Activated CD4-positive, alpha-beta T cell treated with anti-CD3 and anti-CD28 coated beads for 36 hours (primary cell): ENCODE measurements at regions of chr1 and their contacts with region 1.

Region 1: GRCh38 chr1:59814180-59814900 is 409 bp upstream of the HOOK1 start:
- DNase-seq: peak; percentile 92
- ATAC-seq: peak; percentile 96
- H3K4me3 Mint-ChIP-seq: no peak overlapping the region
- H3K27ac Mint-ChIP-seq: peak overlapping the region; percentile 73
- H3K4me1 Mint-ChIP-seq: peaks cover 8% of the 10 kb centered on the region
- H3K27me3 Mint-ChIP-seq: peaks cover 5% of the 10 kb centered on the region

Region 2: DNA sequence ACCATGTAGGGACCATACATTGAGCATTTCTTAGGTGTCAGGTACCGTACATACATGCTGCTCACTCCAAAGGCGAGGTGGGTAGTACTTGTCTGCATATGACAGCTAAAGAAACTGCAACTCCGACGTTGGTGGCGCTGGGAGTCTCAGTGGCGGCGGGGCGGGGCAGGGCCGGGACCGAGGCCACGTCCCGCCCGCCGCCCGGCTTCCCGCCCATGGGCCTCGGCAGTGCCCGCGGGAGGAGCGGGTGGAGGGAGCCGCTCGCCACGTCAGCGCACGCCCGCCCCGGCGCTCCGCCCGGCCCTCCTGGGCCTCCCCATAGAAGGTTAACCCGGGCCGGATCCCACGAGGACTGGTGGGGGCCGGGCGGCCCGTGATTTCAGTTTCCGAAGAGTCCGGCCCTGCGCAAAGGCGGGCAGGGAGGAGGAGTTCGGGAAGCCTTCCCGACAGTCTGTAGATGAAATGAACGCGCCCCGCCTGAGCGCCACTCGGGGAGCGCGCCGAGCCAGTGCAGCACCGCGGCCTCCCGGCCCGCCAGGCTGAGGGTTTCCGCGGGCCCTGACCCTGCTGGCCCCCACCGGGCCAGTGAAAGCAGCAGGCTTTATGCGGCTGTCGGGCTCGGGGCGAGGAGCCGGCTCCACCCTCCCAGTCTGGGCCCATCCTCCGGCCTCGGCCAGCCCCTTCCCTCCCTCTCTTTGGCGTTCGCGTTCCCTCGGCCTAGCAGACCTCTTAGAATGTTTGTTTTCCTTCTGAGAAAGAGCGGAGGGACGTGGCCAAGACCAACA is 910.6 kb before region 1 on chr1:
- CTCF ChIA-PET with region 1: no interaction called
- POLR2A ChIA-PET with region 1: no interaction called
- intact Hi-C with region 1: loop called in 1 of 2 experiments (anchors 1 kb)
- DNase-seq: peak; percentile 92
- ATAC-seq: peak; percentile 94
- H3K4me3 Mint-ChIP-seq: peak overlapping the region; percentile 62
- H3K27ac Mint-ChIP-seq: peak overlapping the region; percentile 80
- H3K4me1 Mint-ChIP-seq: peaks cover 15% of the 10 kb centered on the region
- H3K27me3 Mint-ChIP-seq: no peaks in the 10 kb centered on the region

Region 3: GRCh38 chr1:59669752-59670312 is 144.5 kb before region 1 on chr1:
- CTCF ChIA-PET with region 1: no interaction called
- POLR2A ChIA-PET with region 1: no interaction called
- intact Hi-C with region 1: no loop called
- DNase-seq: no peak
- ATAC-seq: no peak
- H3K4me3 Mint-ChIP-seq: no peak overlapping the region
- H3K27ac Mint-ChIP-seq: no peak overlapping the region
- H3K4me1 Mint-ChIP-seq: no peaks in the 10 kb centered on the region
- H3K27me3 Mint-ChIP-seq: no peaks in the 10 kb centered on the region

Region 4: GRCh38 chr1:59926381-59927123 is 112.2 kb after region 1 on chr1 and contains the start of gene CYP2J2:
- CTCF ChIA-PET with region 1: no interaction called
- POLR2A ChIA-PET with region 1: no interaction called
- intact Hi-C with region 1: loop called in 1 of 2 experiments (anchors 1 kb)
- DNase-seq: peak; percentile 69
- ATAC-seq: peak; percentile 93
- H3K4me3 Mint-ChIP-seq: peak within 1 kb of the TSS; percentile 78
- H3K27ac Mint-ChIP-seq: peak within 1 kb of the TSS; percentile 49
- H3K4me1 Mint-ChIP-seq: peaks cover 13% of the 10 kb centered on the region
- H3K27me3 Mint-ChIP-seq: peaks cover 24% of the 10 kb centered on the region
- total RNA-seq, gene CYP2J2: 1.3 to 1.6 TPM